Activated naive CD4-positive, alpha-beta T cell treated with anti-CD3 and anti-CD28 coated beads for 36 hours (primary cell): ENCODE measurements at regions of chr10 and their contacts with region 1.

Region 1: GRCh38 chr10:97572214-97572989 is at the start of gene ANKRD2:
- DNase-seq: peak; percentile 73
- H3K4me3 Mint-ChIP-seq: no peak within 1 kb of the TSS
- H3K27ac Mint-ChIP-seq: no peak within 1 kb of the TSS
- H3K4me1 Mint-ChIP-seq: no peaks in the 10 kb centered on the region
- H3K27me3 Mint-ChIP-seq: no peaks in the 10 kb centered on the region
- total RNA-seq, gene ANKRD2: 0.26 TPM in 1 of 2 experiments, not detected in the other

Region 2: DNA sequence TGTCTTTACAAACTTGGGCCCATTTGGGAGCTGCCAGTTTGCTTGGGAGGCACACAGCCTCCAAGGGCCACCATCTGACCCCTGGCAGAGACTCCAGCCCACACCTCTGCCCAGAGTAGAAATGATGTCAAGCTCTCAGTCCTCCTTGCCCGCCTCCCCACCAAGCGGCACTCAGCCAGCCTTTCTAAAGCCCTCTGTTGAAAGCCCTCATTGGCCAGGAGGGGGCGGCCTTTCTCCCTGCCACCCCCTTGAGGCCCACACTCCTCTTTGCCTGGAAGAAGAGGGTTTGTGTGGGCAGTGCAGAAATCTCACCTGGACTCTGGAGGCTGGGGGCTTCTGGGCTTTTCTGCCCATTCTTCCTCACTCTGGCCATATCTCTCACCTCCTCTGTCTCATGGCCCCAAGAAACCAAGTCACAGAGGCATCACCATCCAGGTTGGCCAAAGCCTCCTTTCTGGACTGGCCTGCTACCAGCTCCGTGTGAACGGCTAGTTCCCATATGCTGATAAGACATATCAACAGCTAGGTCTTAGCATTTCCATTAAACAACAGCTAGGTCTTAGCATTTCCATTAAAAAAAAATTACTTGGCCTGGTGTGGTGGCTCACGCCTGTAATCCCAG is 37.5 kb before region 1 on chr10:
- CTCF ChIA-PET with region 1: interaction called, 20 read pairs
- intact Hi-C with region 1: no loop called
- DNase-seq: peak; percentile 59
- H3K4me3 Mint-ChIP-seq: no peak overlapping the region
- H3K27ac Mint-ChIP-seq: no peak overlapping the region
- H3K4me1 Mint-ChIP-seq: no peaks in the 10 kb centered on the region
- H3K27me3 Mint-ChIP-seq: no peaks in the 10 kb centered on the region

Region 3: GRCh38 chr10:97612386-97612785 is 40.0 kb after region 1 on chr10:
- CTCF ChIA-PET with region 1: interaction called, 8 read pairs
- intact Hi-C with region 1: loop called (anchors 2 kb)
- DNase-seq: no peak
- H3K4me3 Mint-ChIP-seq: no peak overlapping the region
- H3K27ac Mint-ChIP-seq: no peak overlapping the region
- H3K4me1 Mint-ChIP-seq: no peaks in the 10 kb centered on the region
- H3K27me3 Mint-ChIP-seq: no peaks in the 10 kb centered on the region

Region 4: GRCh38 chr10:97659589-97659988 is 87.2 kb after region 1 on chr10:
- CTCF ChIA-PET with region 1: no interaction called
- intact Hi-C with region 1: no loop called
- DNase-seq: no peak
- H3K4me3 Mint-ChIP-seq: no peak overlapping the region
- H3K27ac Mint-ChIP-seq: no peak overlapping the region
- H3K4me1 Mint-ChIP-seq: no peaks in the 10 kb centered on the region
- H3K27me3 Mint-ChIP-seq: no peaks in the 10 kb centered on the region

Region 5: DNA sequence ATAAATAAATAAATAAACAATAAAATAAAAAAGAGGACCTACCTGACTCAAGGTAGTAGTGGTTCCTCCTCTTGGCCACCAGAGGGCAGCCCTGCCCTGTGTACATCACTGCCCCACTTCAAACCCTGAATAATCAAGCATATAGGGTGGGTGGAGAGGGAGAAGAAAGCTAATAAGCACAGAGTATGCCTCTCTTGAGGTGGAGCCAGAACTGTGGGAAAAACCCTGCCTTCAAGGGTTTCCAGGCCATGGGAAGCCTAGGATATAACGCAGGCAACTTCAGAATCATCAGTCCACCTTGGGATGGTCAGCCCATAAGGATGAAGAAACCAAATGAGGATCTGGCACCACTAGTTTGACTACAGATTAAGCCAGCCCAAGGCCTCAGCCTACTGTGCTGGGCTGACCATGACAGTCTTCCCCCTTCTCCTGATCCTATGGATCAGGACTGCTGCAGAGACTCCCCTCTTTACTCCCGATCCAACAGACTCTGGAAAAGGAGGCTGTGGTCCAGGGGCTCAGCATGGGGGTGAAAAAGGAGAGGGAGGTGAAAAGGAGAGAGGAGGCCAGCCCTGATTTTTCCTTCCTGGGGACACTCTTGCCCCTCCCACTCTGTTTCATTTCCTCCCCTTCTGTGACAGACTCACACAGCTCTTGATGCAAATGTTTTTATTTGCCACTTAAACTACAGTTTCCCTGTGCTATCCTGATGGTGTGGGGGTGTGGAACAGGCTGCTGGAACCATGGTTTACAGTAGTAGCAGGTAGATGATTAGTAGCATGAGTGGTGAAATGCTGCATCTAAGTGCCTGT is 104.6 kb after region 1 on chr10:
- CTCF ChIA-PET with region 1: interaction called, 8 read pairs
- intact Hi-C with region 1: loop called (anchors 2 kb)
- DNase-seq: peak; percentile 48
- H3K4me3 Mint-ChIP-seq: no peak overlapping the region
- H3K27ac Mint-ChIP-seq: no peak overlapping the region
- H3K4me1 Mint-ChIP-seq: no peaks in the 10 kb centered on the region
- H3K27me3 Mint-ChIP-seq: no peaks in the 10 kb centered on the region

Region 6: DNA sequence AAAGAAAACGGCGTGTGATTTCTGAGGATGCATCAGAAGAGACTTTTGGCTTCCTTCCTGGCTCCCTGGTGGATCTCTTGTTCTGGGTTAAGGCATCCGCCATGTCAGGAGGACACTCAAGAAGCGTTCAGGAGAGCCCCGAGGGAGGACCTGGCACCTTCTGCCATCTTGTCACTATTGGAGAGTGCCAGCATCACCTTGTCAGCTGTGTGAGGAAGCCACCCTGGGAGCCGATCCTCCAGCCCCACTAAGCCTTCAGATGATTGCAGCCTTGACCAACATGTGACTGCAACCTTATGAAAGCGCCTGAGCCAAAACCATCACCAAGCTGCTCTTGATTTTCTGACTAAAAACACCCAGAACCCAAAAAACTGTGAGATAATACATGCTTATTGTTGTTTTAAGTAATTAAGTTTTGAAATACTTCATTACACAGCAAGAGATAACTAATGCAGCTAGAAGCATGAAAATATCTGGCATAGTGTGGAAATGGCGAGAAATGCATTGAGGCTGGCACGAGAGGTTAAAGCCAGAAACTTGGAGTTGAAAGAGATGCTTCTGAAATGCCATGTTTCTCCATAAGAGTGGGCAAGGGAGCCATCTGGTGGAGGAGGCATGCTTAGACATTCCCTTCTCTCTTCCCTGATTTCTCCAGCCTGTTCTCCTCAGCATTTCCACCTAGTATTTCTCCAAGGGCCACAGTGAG is 159.1 kb after region 1 on chr10:
- CTCF ChIA-PET with region 1: interaction called, 7 read pairs
- intact Hi-C with region 1: loop called (anchors 5 kb)
- DNase-seq: peak; percentile 79
- H3K4me3 Mint-ChIP-seq: no peak overlapping the region
- H3K27ac Mint-ChIP-seq: no peak overlapping the region
- H3K4me1 Mint-ChIP-seq: peaks cover 6% of the 10 kb centered on the region
- H3K27me3 Mint-ChIP-seq: no peaks in the 10 kb centered on the region

Region 7: DNA sequence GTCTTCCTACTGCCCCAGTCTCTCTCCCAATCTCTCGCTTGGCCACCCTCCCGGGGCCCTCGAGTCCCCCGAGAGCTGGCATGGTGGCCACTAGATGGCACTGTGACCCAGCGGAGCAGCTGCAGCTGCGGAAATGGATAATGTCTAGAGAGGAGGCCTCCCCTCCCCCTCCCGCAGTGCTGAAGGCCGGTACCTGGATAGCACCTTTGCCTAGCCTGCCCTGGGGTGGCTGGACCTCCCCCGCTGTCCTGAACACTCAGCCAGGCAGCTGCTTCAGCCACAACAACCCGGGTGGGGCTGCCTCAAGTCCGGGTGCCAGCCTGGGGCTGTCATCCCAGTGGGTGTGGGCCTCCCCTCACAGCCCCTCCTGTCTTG is 342.4 kb after region 1 on chr10:
- CTCF ChIA-PET with region 1: no interaction called
- intact Hi-C with region 1: no loop called
- DNase-seq: peak; percentile 87
- H3K4me3 Mint-ChIP-seq: no peak overlapping the region
- H3K27ac Mint-ChIP-seq: no peak overlapping the region
- H3K4me1 Mint-ChIP-seq: peaks cover 3% of the 10 kb centered on the region
- H3K27me3 Mint-ChIP-seq: no peaks in the 10 kb centered on the region